ENCODE measurements at regions of chr11 and their contacts with region 1.

Region 1: GRCh38 chr11:121464352-121464946 is 11.7 kb upstream of the SORL1-AS1 start:
- DNase-seq: peak in 8 of 9 experiments; percentile 60 to 85 (median 80)
- ATAC-seq: peak; percentile 71
- H3K4me3 ChIP-seq: peak overlapping the region; percentile 4 to 5
- H3K4me3 Mint-ChIP-seq: peak overlapping the region; percentile 59
- H3K27ac ChIP-seq: peak overlapping the region; percentile 35 to 68
- H3K27ac Mint-ChIP-seq: peak overlapping the region; percentile 97
- H3K4me1 ChIP-seq: peaks cover 99% of the 10 kb centered on the region
- H3K4me1 Mint-ChIP-seq: peaks cover 95% of the 10 kb centered on the region
- H3K27me3 ChIP-seq: no peaks in the 10 kb centered on the region
- H3K27me3 Mint-ChIP-seq: no peaks in the 10 kb centered on the region
- CTCF ChIP-seq: no peak

Region 2: DNA sequence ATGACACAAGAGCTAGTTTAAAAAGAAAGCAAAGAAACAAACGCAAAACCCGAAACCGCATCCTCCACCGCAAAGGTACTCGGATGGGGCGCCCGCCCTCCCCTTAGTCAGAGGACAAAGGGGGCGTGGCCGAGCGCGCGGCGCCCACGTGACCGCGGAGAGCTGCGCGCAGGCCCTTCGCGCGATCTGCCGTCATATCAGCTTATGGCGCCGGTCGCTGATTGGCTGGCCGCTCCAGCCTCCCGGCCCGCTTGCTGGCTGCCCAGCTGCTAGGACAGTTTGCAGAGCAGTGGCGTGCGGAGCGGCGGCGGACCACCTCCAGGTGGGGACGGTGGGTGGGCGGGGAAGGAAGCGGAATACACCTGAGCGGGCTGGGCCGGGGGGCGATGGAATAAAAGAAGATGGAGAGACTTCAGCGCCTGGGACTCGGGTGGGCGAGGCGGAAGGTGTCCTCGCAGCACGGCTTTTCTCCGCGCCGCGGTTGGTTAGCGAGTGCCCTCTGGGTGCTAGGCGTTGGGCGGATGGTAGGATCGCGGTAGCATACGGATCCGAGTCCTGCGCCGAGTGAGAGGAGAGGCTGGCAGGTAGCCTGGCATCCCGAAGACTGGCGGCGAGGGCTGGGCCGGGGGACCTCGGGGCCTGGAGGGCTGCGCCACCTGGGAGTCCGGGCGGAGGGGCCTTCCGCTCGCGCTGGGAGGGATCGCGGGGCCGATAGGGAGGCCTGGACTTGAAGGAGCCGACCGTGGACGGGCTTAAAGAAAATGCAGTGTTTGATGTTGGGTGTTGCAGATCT is 171.8 kb before region 1 on chr11 and contains the start of gene SC5D:
- CTCF ChIA-PET with region 1: no interaction called
- POLR2A ChIA-PET with region 1: interaction called, 3 read pairs
- intact Hi-C with region 1: loop called in 1 of 2 experiments (anchors 1 kb)
- DNase-seq: peak; percentile 86 to 98 (median 95)
- ATAC-seq: peak; percentile 83
- H3K4me3 ChIP-seq: peak within 1 kb of the TSS; percentile 77 to 79
- H3K4me3 Mint-ChIP-seq: peak within 1 kb of the TSS; percentile 97
- H3K27ac ChIP-seq: peak within 1 kb of the TSS; percentile 94 to 97
- H3K27ac Mint-ChIP-seq: peak within 1 kb of the TSS; percentile 99
- H3K4me1 ChIP-seq: peaks cover 14% of the 10 kb centered on the region
- H3K4me1 Mint-ChIP-seq: peaks cover 58% of the 10 kb centered on the region
- H3K27me3 ChIP-seq: no peaks in the 10 kb centered on the region
- H3K27me3 Mint-ChIP-seq: no peaks in the 10 kb centered on the region
- CTCF ChIP-seq: no peak
- total RNA-seq, gene SC5D: 69.2 to 70.1 TPM

Region 3: GRCh38 chr11:121482231-121483129 is 18.0 kb after region 1 on chr11:
- CTCF ChIA-PET with region 1: interaction called, 6 read pairs
- POLR2A ChIA-PET with region 1: interaction called, 20 read pairs
- intact Hi-C with region 1: loop called (anchors 1 to 2 kb)
- DNase-seq: peak; percentile 37 to 92 (median 74)
- ATAC-seq: peak; percentile 78
- H3K4me3 ChIP-seq: peak overlapping the region; percentile 34 to 44
- H3K4me3 Mint-ChIP-seq: peak overlapping the region; percentile 73
- H3K27ac ChIP-seq: peak overlapping the region; percentile 71 to 92
- H3K27ac Mint-ChIP-seq: peak overlapping the region; percentile 94
- H3K4me1 ChIP-seq: peaks cover 41% of the 10 kb centered on the region
- H3K4me1 Mint-ChIP-seq: peaks cover 77% of the 10 kb centered on the region
- H3K27me3 ChIP-seq: no peaks in the 10 kb centered on the region
- H3K27me3 Mint-ChIP-seq: no peaks in the 10 kb centered on the region
- CTCF ChIP-seq: no peak

Region 4: GRCh38 chr11:121503051-121503450 is 38.6 kb after region 1 on chr11:
- CTCF ChIA-PET with region 1: no interaction called
- POLR2A ChIA-PET with region 1: no interaction called
- intact Hi-C with region 1: no loop called
- DNase-seq: no peak
- ATAC-seq: no peak
- H3K4me3 ChIP-seq: no peak overlapping the region
- H3K4me3 Mint-ChIP-seq: no peak overlapping the region
- H3K27ac ChIP-seq: no peak overlapping the region
- H3K27ac Mint-ChIP-seq: no peak overlapping the region
- H3K4me1 ChIP-seq: peaks cover 7% of the 10 kb centered on the region
- H3K4me1 Mint-ChIP-seq: peaks cover 45% of the 10 kb centered on the region
- H3K27me3 ChIP-seq: no peaks in the 10 kb centered on the region
- H3K27me3 Mint-ChIP-seq: no peaks in the 10 kb centered on the region
- CTCF ChIP-seq: no peak

Measured in CD8-positive, alpha-beta T cell (primary cell).